Activated T-helper 1 cell treated with anti-CD3 and anti-CD28 coated beads, Interleukin-12 subunit alpha, Interleukin-12 subunit beta, Interleukin-2, Interleukin-4 antibody, amounts not matched to agents 30 ng/mL and 10 ng/mL and 1 ng/mL, durations not matched to agents 14 hours and 24 hours and 36 hours (primary cell): ENCODE measurements at regions of chr6 and their contacts with region 1.

Region 1: DNA sequence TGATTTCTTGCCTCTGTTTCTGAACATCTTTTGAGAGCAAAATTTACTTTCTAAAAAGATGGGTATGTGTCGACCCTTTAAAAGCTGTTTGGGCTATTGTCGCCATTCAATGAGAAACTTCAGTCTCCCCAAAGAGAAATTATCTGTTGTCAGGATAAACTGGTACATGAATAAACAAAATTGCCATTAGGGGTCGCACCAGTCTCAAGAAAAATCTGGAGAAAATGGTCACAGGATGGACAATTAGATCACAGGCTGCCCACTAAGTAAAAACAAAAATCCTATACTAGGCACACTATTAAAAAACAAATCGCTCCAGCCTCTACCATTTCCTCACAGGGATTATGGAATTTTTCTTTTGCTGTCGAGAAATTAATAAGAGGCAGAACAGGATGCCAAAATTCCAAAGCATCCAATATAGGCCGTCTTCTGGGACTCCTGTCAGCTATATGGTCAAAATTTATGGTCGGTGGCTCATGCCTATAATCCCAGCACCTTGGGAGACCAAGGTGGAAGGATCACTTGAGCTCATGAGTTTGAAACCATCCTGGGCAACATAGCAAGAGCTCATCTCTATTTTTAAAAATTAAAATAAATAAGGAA is 5.5 kb upstream of the HLA-E start:
- DNase-seq: no peak
- H3K4me3 Mint-ChIP-seq: no peak overlapping the region
- H3K27ac Mint-ChIP-seq: no peak overlapping the region
- H3K4me1 Mint-ChIP-seq: peaks cover 44% of the 10 kb centered on the region
- H3K27me3 Mint-ChIP-seq: peaks cover 40% of the 10 kb centered on the region

Region 2: DNA sequence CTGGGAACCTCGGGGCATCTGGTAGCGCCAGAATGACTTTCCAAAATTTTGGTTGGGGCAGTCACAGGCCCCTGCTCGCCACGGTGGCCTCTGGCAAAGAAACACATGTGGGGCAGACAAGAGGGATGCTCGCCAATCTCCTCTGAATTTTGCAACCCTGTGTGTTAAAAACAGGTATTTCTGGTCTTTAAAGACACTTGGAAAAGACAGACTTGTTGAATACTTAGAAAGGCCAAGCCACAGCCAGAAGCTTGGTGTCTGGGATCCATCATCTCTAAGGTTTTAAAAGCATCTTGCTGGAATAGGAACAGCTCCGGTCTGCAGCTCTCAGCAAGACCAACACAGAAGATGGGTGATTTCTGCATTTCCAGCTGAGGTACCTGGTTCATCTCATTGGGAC is 36.7 kb after region 1 on chr6:
- intact Hi-C with region 1: no loop called
- DNase-seq: no peak
- H3K4me3 Mint-ChIP-seq: no peak overlapping the region
- H3K27ac Mint-ChIP-seq: no peak overlapping the region
- H3K4me1 Mint-ChIP-seq: peaks cover 54% of the 10 kb centered on the region
- H3K27me3 Mint-ChIP-seq: no peaks in the 10 kb centered on the region

Region 3: GRCh38 chr6:30600451-30600961 is 116.7 kb after region 1 on chr6:
- intact Hi-C with region 1: loop called (anchors 1 kb)
- DNase-seq: no peak
- H3K4me3 Mint-ChIP-seq: no peak overlapping the region
- H3K27ac Mint-ChIP-seq: no peak overlapping the region
- H3K4me1 Mint-ChIP-seq: peaks cover 18% of the 10 kb centered on the region
- H3K27me3 Mint-ChIP-seq: no peaks in the 10 kb centered on the region